GM12878 (cell line): ENCODE measurements at regions of chr6 and their contacts with region 1.

Region 1: DNA sequence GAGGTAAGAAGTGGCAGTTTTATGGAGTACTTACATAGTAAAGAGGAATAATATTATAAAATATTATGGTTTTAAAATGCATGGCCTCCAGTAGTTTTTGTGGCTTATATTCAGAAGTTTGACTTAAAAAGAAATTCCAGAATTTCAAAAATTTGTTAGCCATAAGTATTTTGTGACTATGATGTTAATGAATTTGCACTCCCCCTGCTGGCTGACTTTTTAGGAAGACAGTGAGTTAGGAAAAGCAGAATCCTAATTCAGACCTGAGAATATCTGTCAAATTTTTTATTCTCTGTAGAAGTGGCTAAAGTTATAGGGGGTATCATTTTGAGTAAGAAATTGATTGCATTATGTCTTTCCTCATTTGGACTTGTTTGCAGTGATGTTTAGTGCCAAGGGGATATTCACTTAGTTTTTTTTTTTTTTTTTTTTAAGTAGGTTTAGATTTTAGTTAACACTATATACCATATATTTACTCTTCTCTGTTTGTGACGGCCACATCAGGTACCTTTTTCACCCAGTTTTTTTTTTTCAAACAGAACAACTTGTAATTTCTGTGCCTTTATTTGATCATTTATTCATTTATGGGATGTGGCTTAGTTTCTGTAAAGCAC is 40.8 kb downstream of the ZFAND3 start:
- DNase-seq: no peak
- ATAC-seq: 0 out of 3 replicates have a peak, but pooled peaks have one; percentile 34
- H3K4me3 ChIP-seq: no peak overlapping the region
- H3K27ac ChIP-seq: no peak overlapping the region
- H3K4me1 ChIP-seq: no peaks in the 10 kb centered on the region
- H3K27me3 ChIP-seq: no peaks in the 10 kb centered on the region
- CTCF ChIP-seq: peak; percentile 45 to 53 (median 51)
- EP300 ChIP-seq: no peak
- POLR2A ChIP-seq: no peak
- RAD21 ChIP-seq: peak; percentile 46

Region 2: GRCh38 chr6:37791156-37791919 is 69.0 kb before region 1 on chr6:
- CTCF ChIA-PET with region 1: interaction called, 14 read pairs
- POLR2A ChIA-PET with region 1: no interaction called
- RAD21 ChIA-PET with region 1: interaction called, 16 read pairs
- SMC1A ChIA-PET with region 1: interaction called, 25 read pairs
- in situ Hi-C with region 1: no loop called
- intact Hi-C with region 1: loop called (anchors 2 kb)
- DNase-seq: peak; percentile 53
- ATAC-seq: peak; percentile 100
- H3K4me3 ChIP-seq: no peak overlapping the region
- H3K27ac ChIP-seq: no peak overlapping the region
- H3K4me1 ChIP-seq: no peaks in the 10 kb centered on the region
- H3K27me3 ChIP-seq: no peaks in the 10 kb centered on the region
- CTCF ChIP-seq: peak; percentile 92 to 98 (median 95)
- EP300 ChIP-seq: no peak
- POLR2A ChIP-seq: no peak
- RAD21 ChIP-seq: peak; percentile 89

Region 3: DNA sequence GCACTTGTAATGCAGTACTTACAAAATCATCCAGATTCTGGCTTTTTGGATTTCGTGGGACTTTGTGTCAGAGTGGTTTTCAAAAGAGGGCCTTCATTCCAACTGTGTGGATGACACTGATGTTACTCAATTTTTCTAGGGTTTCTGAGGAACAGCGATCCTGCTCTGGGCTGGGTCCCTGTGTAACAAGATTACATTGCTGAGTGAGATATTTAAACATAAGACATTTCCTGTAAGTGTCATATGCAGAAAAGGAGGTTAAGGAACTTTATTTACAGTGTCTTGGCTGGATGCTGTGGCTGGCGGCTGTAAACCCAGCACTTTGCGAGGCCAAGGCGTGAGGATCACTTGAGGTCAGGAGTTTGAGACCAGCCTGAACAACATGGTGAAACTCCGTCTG is 34.1 kb before region 1 on chr6:
- CTCF ChIA-PET with region 1: interaction called, 16 read pairs
- POLR2A ChIA-PET with region 1: interaction called, 4 read pairs
- RAD21 ChIA-PET with region 1: interaction called, 14 read pairs
- SMC1A ChIA-PET with region 1: interaction called, 13 read pairs
- in situ Hi-C with region 1: no loop called
- intact Hi-C with region 1: loop called (anchors 5 kb)
- DNase-seq: no peak
- ATAC-seq: no peak
- H3K4me3 ChIP-seq: no peak overlapping the region
- H3K27ac ChIP-seq: no peak overlapping the region
- H3K4me1 ChIP-seq: peaks cover 10% of the 10 kb centered on the region
- H3K27me3 ChIP-seq: no peaks in the 10 kb centered on the region
- CTCF ChIP-seq: no peak
- EP300 ChIP-seq: no peak
- POLR2A ChIP-seq: no peak
- RAD21 ChIP-seq: no peak

Region 4: GRCh38 chr6:37845026-37845911 is 15.1 kb before region 1 on chr6:
- CTCF ChIA-PET with region 1: interaction called, 21 read pairs
- POLR2A ChIA-PET with region 1: interaction called, 7 read pairs
- RAD21 ChIA-PET with region 1: interaction called, 7 read pairs
- SMC1A ChIA-PET with region 1: interaction called, 7 read pairs
- in situ Hi-C with region 1: no loop called
- intact Hi-C with region 1: no loop called
- DNase-seq: no peak
- ATAC-seq: no peak
- H3K4me3 ChIP-seq: no peak overlapping the region
- H3K27ac ChIP-seq: no peak overlapping the region
- H3K4me1 ChIP-seq: peaks cover 4% of the 10 kb centered on the region
- H3K27me3 ChIP-seq: no peaks in the 10 kb centered on the region
- CTCF ChIP-seq: no peak
- EP300 ChIP-seq: no peak
- POLR2A ChIP-seq: no peak
- RAD21 ChIP-seq: no peak